IMR-90 (cell line): ENCODE measurements at regions of chr2 and their contacts with region 1.

Region 1: GRCh38 chr2:173075781-173076580 is at the start of gene MAP3K20:
- DNase-seq: peak; percentile 71
- ATAC-seq: peak; percentile 61
- H3K4me3 ChIP-seq: peak within 1 kb of the TSS; percentile 95
- H3K27ac ChIP-seq: peak within 1 kb of the TSS; percentile 94
- H3K4me1 ChIP-seq: peaks cover 14% of the 10 kb centered on the region
- H3K27me3 ChIP-seq: no peaks in the 10 kb centered on the region
- CTCF ChIP-seq: peak; percentile 54
- POLR2A ChIP-seq: peak; percentile 65; the same call in 1 of the 2 replicates
- RAD21 ChIP-seq: peak; percentile 55
- total RNA-seq, gene MAP3K20: 84.4 and 93.0 TPM in 2 replicates

Region 2: DNA sequence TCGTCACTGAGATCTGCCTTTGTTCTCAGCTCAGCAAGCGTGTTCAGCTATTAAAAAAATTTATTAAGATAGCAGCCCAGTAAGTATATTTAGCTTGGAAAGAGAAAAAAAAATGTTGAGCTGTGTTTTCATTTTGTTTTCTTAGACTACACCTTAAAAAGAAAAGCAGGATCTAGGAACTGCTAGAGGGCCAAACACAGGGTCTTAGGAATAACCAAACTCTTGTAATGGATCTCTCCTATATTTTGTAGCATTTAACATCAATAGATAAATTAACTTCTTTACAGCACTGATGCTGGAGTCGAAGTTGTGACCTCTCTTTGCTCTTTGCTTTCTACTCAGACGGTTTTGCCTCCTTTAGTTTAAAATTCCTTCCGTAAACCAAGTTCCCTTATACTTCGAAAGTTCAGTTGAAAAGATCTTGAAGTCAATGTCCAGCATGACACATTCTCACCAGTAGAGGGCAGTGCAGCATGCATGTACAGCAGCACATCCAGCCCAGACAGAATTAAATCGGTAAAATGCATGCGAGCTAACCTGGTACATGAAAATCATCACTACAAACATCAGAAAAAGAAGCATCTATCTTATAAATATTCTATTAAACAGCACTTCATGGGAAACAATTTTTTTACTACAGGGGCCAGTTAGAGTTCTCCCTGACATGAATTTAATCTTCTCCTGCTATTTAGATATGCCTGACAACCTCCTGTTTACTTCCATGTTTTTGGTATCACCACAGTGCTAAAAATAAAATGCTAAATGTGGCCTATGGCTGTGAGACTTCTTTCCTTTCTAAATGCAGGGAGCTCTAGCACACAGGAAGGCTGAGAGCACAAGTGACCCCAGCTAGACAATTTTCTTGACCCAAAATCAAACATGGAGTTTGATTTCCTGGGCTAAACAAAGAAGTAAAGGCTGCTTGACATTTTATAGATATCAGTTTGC is 48.5 kb before region 1 on chr2:
- CTCF ChIA-PET with region 1: interaction called, 6 read pairs
- POLR2A ChIA-PET with region 1: no interaction called
- dilution Hi-C with region 1: no loop called
- in situ Hi-C with region 1: no loop called
- intact Hi-C with region 1: loop called (anchors 1 kb)
- DNase-seq: peak; percentile 93
- ATAC-seq: peak; percentile 77
- H3K4me3 ChIP-seq: no peak overlapping the region
- H3K27ac ChIP-seq: peak overlapping the region; percentile 99; the same call in 1 of the 2 replicates
- H3K4me1 ChIP-seq: peaks cover 9% of the 10 kb centered on the region
- H3K27me3 ChIP-seq: no peaks in the 10 kb centered on the region
- CTCF ChIP-seq: peak; percentile 96
- POLR2A ChIP-seq: peak; percentile 51; the same call in 1 of the 2 replicates
- RAD21 ChIP-seq: peak; percentile 98

Region 3: DNA sequence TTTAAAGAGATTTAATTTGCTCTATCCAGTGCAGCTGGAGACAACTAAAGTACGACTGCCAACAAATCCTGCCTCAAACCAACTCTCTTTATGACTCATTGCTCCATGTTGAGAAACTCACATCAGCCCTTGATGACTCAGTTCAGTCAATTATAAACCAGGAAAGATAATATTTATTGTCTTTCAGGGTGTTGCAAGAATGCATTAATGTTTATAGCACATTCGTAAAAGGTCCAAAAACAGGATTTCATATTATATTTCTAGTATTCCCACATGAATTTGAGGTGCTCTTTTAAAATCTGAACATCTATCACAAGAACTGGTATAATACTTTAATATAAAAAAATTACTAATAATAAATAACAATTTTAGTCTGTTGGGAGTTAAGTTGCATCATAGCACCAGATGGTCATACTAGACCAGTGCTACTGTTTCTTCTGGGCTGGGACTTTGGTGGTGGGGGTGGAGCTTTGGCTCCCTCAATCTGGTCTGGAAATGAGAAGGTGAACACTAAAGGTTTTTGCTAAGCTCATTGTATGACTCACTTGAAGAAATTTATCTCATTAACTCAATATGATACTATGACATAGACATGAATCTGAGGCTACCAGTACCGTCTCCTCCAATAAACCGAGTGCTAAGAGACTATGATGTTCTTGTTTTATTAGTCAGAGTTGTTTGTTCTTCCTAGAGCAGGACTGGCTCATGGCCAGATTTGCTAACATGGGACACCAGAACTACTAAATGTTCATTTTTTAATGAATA is 26.9 kb before region 1 on chr2:
- CTCF ChIA-PET with region 1: no interaction called
- POLR2A ChIA-PET with region 1: no interaction called
- dilution Hi-C with region 1: no loop called
- in situ Hi-C with region 1: no loop called
- intact Hi-C with region 1: loop called (anchors 1 kb)
- DNase-seq: peak; percentile 98
- ATAC-seq: peak; percentile 84
- H3K4me3 ChIP-seq: no peak overlapping the region
- H3K27ac ChIP-seq: peak overlapping the region; percentile 79; the same call in 1 of the 2 replicates
- H3K4me1 ChIP-seq: peaks cover 24% of the 10 kb centered on the region
- H3K27me3 ChIP-seq: no peaks in the 10 kb centered on the region
- CTCF ChIP-seq: no peak
- POLR2A ChIP-seq: no peak
- RAD21 ChIP-seq: no peak

Region 4: DNA sequence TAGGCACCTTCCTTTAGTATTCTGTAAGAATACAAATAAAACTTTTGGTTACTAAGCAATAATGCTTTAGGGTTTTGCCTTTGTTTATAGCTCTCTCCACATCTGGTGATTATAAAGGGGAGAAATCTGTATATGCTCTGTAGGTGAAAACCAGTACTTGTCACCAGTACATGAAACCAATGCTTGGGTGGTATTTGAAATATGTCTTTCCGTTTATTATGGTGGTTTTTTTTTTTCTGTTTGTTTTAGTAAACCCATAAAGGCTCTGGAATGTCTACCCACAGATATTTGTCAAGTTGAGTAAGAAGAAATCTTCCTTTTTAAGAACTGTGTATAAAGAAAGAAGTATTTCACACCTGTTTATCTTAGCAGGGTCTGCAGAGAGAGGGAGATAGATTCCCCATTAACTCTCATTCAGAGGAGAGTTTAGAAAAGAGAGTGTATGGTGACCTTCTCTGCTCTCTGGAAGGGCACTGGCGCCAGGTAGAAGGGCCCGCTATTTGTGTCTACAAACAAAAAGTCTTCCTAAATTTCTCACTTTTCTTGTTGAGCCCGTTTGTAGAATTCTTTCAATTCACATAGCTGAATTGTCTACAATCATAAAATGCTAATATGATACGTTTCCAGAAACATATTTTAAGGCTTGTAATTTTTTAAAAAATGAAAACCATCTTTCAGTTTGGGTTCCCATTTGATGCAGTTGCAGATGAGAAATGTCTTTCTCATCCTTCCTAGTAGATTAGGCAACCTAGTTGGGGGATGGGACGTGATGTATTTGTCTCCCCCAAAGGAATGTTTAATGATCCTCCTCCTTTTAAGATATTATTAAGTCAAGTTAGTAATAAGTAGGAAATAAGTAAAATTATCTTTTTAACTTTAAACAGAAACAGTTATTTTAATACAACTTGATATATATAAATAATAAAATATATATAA is 33.5 kb after region 1 on chr2:
- CTCF ChIA-PET with region 1: no interaction called
- POLR2A ChIA-PET with region 1: no interaction called
- dilution Hi-C with region 1: no loop called
- in situ Hi-C with region 1: no loop called
- intact Hi-C with region 1: loop called (anchors 1 kb)
- DNase-seq: peak; percentile 89
- ATAC-seq: peak; percentile 84
- H3K4me3 ChIP-seq: no peak overlapping the region
- H3K27ac ChIP-seq: peak overlapping the region; percentile 77; the same call in 1 of the 2 replicates
- H3K4me1 ChIP-seq: peaks cover 9% of the 10 kb centered on the region
- H3K27me3 ChIP-seq: no peaks in the 10 kb centered on the region
- CTCF ChIP-seq: no peak
- POLR2A ChIP-seq: no peak
- RAD21 ChIP-seq: no peak

Region 5: GRCh38 chr2:173159794-173160463 is 83.9 kb after region 1 on chr2:
- CTCF ChIA-PET with region 1: no interaction called
- POLR2A ChIA-PET with region 1: no interaction called
- dilution Hi-C with region 1: no loop called
- in situ Hi-C with region 1: no loop called
- intact Hi-C with region 1: loop called (anchors 5 kb)
- DNase-seq: peak; percentile 99
- ATAC-seq: peak; percentile 96
- H3K4me3 ChIP-seq: no peak overlapping the region
- H3K27ac ChIP-seq: peak overlapping the region; percentile 100; the same call in 1 of the 2 replicates
- H3K4me1 ChIP-seq: peaks cover 8% of the 10 kb centered on the region
- H3K27me3 ChIP-seq: no peaks in the 10 kb centered on the region
- CTCF ChIP-seq: no peak
- POLR2A ChIP-seq: no peak
- RAD21 ChIP-seq: no peak

Region 6: DNA sequence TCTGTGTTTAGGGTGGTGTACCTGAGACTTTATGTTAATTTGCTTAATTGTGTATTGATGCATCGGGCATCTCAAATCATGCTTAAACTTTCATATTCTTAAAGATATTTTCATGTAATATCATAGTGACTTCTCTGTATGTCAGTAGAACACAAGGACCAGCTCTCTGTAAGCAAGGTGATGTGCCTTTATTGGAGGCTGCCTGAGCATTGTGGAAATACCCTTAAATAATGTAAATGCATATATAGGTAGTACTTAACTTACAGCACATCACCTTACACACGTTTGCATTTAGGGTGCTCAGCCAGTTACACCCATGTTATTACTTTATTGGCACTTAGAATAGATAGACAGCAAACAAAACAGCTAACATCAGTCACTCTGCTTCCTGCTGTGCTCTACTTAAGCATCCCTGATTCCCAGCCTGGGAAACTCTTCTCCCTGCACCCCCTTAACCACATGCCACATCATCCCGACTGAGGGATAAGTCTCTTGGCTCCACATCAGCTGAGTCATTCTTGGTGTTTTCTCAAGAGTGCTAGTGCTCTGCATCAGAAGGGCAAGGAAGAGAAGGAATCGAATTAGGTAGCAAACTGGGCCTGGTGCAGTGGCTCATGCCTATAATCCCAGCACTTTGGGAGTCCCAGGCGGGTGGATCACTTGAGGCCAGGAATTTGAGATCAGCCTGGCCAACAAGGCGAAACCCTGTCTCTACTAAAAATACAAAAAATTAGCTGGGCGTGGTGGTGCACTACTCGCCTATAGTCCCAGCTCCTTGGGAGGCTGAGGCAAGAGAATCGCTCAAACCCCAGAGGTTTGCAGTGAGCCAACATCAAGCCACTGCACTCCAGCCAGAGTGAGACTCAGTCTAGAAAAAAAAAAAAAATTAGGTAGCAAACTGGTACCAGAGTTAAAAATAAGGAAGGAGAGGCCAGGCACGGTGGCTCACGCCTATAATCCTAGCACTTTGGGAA is 108.3 kb after region 1 on chr2:
- CTCF ChIA-PET with region 1: no interaction called
- POLR2A ChIA-PET with region 1: no interaction called
- dilution Hi-C with region 1: no loop called
- in situ Hi-C with region 1: no loop called
- intact Hi-C with region 1: loop called (anchors 10 kb)
- DNase-seq: peak; percentile 100
- ATAC-seq: peak; percentile 95
- H3K4me3 ChIP-seq: no peak overlapping the region
- H3K27ac ChIP-seq: peak overlapping the region; percentile 40
- H3K4me1 ChIP-seq: peaks cover 5% of the 10 kb centered on the region
- H3K27me3 ChIP-seq: no peaks in the 10 kb centered on the region
- CTCF ChIP-seq: no peak
- POLR2A ChIP-seq: no peak; the same call in 1 of the 2 replicates
- RAD21 ChIP-seq: peak; percentile 12; the same call in 1 of the 2 replicates

Region 7: GRCh38 chr2:173210270-173211196 is 134.6 kb after region 1 on chr2:
- CTCF ChIA-PET with region 1: interaction called, 5 read pairs
- POLR2A ChIA-PET with region 1: no interaction called
- dilution Hi-C with region 1: no loop called
- in situ Hi-C with region 1: no loop called
- intact Hi-C with region 1: loop called (anchors 1 kb)
- DNase-seq: peak; percentile 97
- ATAC-seq: peak; percentile 98
- H3K4me3 ChIP-seq: no peak overlapping the region
- H3K27ac ChIP-seq: peak overlapping the region; percentile 36; the same call in 1 of the 2 replicates
- H3K4me1 ChIP-seq: peaks cover 2% of the 10 kb centered on the region; the same call in 1 of the 2 replicates
- H3K27me3 ChIP-seq: no peaks in the 10 kb centered on the region
- CTCF ChIP-seq: peak; percentile 97
- POLR2A ChIP-seq: 0 out of 2 replicates have a peak, but pooled peaks have one; percentile 30
- RAD21 ChIP-seq: peak; percentile 99